Activated CD4-positive, alpha-beta T cell treated with anti-CD3 and anti-CD28 coated beads, Interleukin-2, amount 10 ng/mL, durations not matched to agents 24 days and 14 days (primary cell): ENCODE measurements at regions of chr4 and their contacts with region 1.

Region 1: GRCh38 chr4:113684534-113685091 is 76.9 kb downstream of the CAMK2D start:
- DNase-seq: peak; percentile 71
- H3K4me3 Mint-ChIP-seq: peak overlapping the region; percentile 69
- H3K27ac Mint-ChIP-seq: peak overlapping the region; percentile 95
- H3K4me1 Mint-ChIP-seq: peaks cover 56% of the 10 kb centered on the region
- H3K27me3 Mint-ChIP-seq: no peaks in the 10 kb centered on the region

Region 2: GRCh38 chr4:113445286-113445685 is 239.3 kb before region 1 on chr4:
- intact Hi-C with region 1: loop called (anchors 1 kb)
- DNase-seq: no peak
- H3K4me3 Mint-ChIP-seq: no peak overlapping the region
- H3K27ac Mint-ChIP-seq: peak overlapping the region; percentile 66
- H3K4me1 Mint-ChIP-seq: peaks cover 28% of the 10 kb centered on the region
- H3K27me3 Mint-ChIP-seq: peaks cover 1% of the 10 kb centered on the region

Region 3: GRCh38 chr4:113499696-113500095 is 184.9 kb before region 1 on chr4:
- intact Hi-C with region 1: no loop called
- DNase-seq: no peak
- H3K4me3 Mint-ChIP-seq: no peak overlapping the region
- H3K27ac Mint-ChIP-seq: no peak overlapping the region
- H3K4me1 Mint-ChIP-seq: no peaks in the 10 kb centered on the region
- H3K27me3 Mint-ChIP-seq: no peaks in the 10 kb centered on the region

Region 4: GRCh38 chr4:113547487-113548042 is 137.0 kb before region 1 on chr4:
- intact Hi-C with region 1: loop called (anchors 1 kb)
- DNase-seq: peak; percentile 96
- H3K4me3 Mint-ChIP-seq: peak overlapping the region; percentile 17
- H3K27ac Mint-ChIP-seq: peak overlapping the region; percentile 25
- H3K4me1 Mint-ChIP-seq: peaks cover 23% of the 10 kb centered on the region
- H3K27me3 Mint-ChIP-seq: no peaks in the 10 kb centered on the region

Region 5: DNA sequence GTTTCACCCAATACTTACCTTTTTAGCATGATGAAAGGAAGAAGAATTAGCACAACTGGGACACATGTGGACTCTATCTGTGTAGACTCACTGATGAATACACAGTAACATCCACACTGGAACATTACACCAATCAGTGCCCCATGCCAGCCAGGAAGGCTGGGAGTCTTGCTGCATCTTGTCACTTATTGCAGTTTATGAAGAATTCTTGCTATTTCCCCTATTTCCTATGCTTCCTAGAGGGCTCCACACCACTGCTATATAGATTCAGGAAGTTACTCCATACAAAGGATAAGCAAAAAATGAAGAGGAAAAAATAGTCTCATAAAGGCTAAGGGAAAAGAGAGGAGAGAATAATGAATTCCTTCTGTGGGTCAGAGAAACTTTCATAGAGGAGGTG is 124.0 kb before region 1 on chr4:
- intact Hi-C with region 1: no loop called
- DNase-seq: no peak
- H3K4me3 Mint-ChIP-seq: no peak overlapping the region
- H3K27ac Mint-ChIP-seq: no peak overlapping the region
- H3K4me1 Mint-ChIP-seq: peaks cover 31% of the 10 kb centered on the region
- H3K27me3 Mint-ChIP-seq: no peaks in the 10 kb centered on the region

Region 6: DNA sequence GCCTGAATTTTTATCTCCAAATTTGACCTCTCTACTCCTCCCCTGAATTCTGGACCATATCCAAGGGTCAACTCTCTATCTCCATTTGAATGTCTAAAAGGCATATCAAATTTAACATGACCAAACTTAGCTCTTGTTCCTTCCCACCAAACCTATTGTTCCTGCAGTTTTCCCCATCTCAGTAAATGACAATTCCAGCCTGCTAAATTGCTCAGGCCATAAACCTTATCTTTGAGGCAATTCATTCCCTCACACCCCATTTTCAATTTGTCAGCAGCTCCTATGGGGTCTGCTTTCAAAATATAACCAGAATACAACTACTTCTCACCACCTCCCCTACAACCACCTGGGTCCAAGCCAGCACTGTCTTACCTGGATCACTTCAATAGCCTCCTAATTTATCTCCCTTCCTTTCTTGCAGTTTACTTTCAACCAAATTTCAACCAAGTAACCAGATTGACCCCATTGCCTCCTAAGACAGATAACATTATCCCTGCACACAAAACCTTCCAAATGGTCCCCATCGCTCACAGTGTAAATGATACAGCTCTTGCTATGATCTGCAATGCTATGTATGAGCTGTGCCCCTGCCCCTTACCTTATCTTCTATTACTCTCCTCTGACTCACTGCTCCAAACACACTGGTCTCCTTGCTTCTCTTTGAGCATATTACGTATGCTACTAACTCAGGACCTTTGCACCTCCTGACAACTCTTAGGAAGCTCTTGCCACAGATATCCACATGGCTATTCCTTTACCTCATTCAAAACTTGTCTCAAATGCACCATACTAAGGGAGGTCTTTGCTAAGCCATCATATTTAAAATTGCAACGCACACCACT is 10.9 kb after region 1 on chr4:
- intact Hi-C with region 1: loop called (anchors 1 kb)
- DNase-seq: no peak
- H3K4me3 Mint-ChIP-seq: no peak overlapping the region
- H3K27ac Mint-ChIP-seq: no peak overlapping the region
- H3K4me1 Mint-ChIP-seq: peaks cover 28% of the 10 kb centered on the region
- H3K27me3 Mint-ChIP-seq: no peaks in the 10 kb centered on the region

Region 7: DNA sequence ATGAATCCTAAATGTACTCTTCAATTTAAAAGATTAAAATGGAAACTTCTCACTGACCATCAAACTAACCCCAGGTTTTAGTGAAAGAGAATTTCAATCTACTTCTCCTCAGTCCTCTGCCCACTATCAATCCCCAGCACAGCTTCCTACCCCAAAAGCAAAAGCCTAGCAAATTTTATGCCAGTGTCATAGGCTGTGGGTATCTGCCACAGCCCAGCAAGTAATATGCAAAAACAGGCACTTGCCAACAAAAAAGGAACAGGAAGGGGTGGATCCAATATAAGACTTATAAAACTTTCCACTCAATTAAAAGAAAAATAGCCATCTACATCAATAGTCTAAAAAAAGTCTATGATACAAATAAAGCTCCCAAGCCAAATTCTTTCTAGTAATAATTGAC is 54.6 kb after region 1 on chr4:
- intact Hi-C with region 1: no loop called
- DNase-seq: no peak
- H3K4me3 Mint-ChIP-seq: no peak overlapping the region
- H3K27ac Mint-ChIP-seq: peak overlapping the region; percentile 34
- H3K4me1 Mint-ChIP-seq: peaks cover 32% of the 10 kb centered on the region
- H3K27me3 Mint-ChIP-seq: no peaks in the 10 kb centered on the region

Region 8: GRCh38 chr4:113761620-113762185 is 77.1 kb after region 1 on chr4 and contains the start of gene CAMK2D:
- intact Hi-C with region 1: loop called (anchors 1 kb)
- DNase-seq: peak; percentile 93
- H3K4me3 Mint-ChIP-seq: peak within 1 kb of the TSS; percentile 95
- H3K27ac Mint-ChIP-seq: peak within 1 kb of the TSS; percentile 99
- H3K4me1 Mint-ChIP-seq: peaks cover 44% of the 10 kb centered on the region
- H3K27me3 Mint-ChIP-seq: peaks cover 3% of the 10 kb centered on the region
- total RNA-seq, gene CAMK2D: 63.8 and 69.3 TPM in 2 replicates

Region 9: DNA sequence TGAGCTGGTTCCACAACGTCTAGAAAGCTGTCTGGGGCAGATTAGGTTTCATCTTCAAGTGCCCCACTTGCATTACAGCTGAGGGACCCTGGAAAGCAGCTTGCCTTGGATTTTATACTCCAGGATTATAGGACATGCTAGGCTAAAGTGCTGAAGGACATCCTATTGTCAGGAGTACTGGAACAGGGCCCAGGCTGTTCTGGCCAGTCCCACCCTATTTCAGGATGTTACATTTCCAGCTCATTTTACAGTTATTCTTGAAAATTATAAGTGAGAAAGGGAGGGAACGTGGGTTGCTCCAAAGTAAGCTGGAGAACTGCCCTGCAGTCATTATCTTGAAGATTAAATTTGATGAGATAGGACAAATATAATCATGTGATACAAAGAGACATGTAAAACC is 843.0 kb after region 1 on chr4:
- intact Hi-C with region 1: no loop called
- DNase-seq: no peak
- H3K4me3 Mint-ChIP-seq: no peak overlapping the region
- H3K27ac Mint-ChIP-seq: no peak overlapping the region
- H3K4me1 Mint-ChIP-seq: no peaks in the 10 kb centered on the region
- H3K27me3 Mint-ChIP-seq: no peaks in the 10 kb centered on the region